ENCODE measurements at regions of chr2 and their contacts with region 1.

Region 1: GRCh38 chr2:224650815-224651439 is 65.2 kb downstream of the CCDC195 start:
- DNase-seq: no peak
- ATAC-seq: peak; percentile 64
- H3K4me3 Mint-ChIP-seq: no peak overlapping the region
- H3K27ac Mint-ChIP-seq: no peak overlapping the region
- H3K4me1 Mint-ChIP-seq: peaks cover 12% of the 10 kb centered on the region
- H3K27me3 Mint-ChIP-seq: no peaks in the 10 kb centered on the region
- CTCF ChIP-seq: peak; percentile 77

Region 2: GRCh38 chr2:223601932-223602666 is 1048.8 kb before region 1 on chr2 and contains the start of gene SCG2:
- CTCF ChIA-PET with region 1: no interaction called
- POLR2A ChIA-PET with region 1: no interaction called
- intact Hi-C with region 1: no loop called
- DNase-seq: no peak
- ATAC-seq: no peak
- H3K4me3 Mint-ChIP-seq: no peak within 1 kb of the TSS
- H3K27ac Mint-ChIP-seq: no peak within 1 kb of the TSS
- H3K4me1 Mint-ChIP-seq: peaks cover 4% of the 10 kb centered on the region
- H3K27me3 Mint-ChIP-seq: peaks cover 16% of the 10 kb centered on the region
- CTCF ChIP-seq: no peak
- total RNA-seq, gene SCG2: 0.15 and 0.35 TPM in 2 replicates

Region 3: GRCh38 chr2:223970343-223971128 is 680.4 kb before region 1 on chr2:
- CTCF ChIA-PET with region 1: interaction called, 7 read pairs
- POLR2A ChIA-PET with region 1: no interaction called
- intact Hi-C with region 1: loop called (anchors 5 kb)
- DNase-seq: no peak
- ATAC-seq: peak; percentile 64
- H3K4me3 Mint-ChIP-seq: no peak overlapping the region
- H3K27ac Mint-ChIP-seq: no peak overlapping the region
- H3K4me1 Mint-ChIP-seq: peaks cover 3% of the 10 kb centered on the region
- H3K27me3 Mint-ChIP-seq: no peaks in the 10 kb centered on the region
- CTCF ChIP-seq: peak; percentile 90

Region 4: DNA sequence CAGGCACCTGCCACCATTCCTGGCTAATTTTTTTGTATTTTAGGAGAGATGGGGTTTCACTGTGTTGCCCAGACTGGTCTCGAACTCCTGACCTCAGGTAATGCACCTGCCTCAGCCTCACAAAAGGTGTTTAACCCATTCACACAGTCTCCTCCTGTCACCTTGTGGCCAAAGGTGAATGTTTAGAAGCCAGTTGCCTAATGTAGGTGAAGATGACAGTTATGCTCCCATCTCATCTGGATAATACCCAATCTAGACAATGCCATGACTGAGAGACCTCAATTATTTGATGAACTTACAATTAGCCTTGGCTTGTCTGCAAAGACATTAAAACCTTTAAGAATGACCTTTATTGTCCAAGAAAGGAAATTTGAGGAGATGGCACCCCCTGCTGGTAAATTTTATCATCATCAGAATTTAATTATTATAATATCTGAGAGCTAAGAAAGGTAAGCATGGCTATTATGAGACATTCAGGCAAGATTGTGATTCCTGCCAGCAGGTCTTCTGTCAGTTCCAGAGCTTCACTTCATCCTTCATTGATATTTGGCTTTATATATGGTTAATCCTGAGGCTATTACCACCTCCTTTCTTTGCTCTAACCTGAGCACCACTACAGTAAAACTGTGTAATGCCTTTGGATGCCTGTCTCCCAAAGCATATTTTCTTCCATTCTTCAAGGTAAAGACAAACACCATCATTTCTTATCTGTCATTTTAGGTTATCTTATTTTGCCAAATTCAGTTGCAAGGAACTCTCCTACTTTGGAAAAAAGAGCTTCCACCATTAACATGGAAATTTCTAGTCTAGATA is 366.6 kb before region 1 on chr2:
- CTCF ChIA-PET with region 1: interaction called, 3 read pairs
- POLR2A ChIA-PET with region 1: no interaction called
- intact Hi-C with region 1: loop called (anchors 1 kb)
- DNase-seq: no peak
- ATAC-seq: no peak
- H3K4me3 Mint-ChIP-seq: no peak overlapping the region
- H3K27ac Mint-ChIP-seq: no peak overlapping the region
- H3K4me1 Mint-ChIP-seq: no peaks in the 10 kb centered on the region
- H3K27me3 Mint-ChIP-seq: peaks cover 23% of the 10 kb centered on the region
- CTCF ChIP-seq: peak; percentile 58

Region 5: DNA sequence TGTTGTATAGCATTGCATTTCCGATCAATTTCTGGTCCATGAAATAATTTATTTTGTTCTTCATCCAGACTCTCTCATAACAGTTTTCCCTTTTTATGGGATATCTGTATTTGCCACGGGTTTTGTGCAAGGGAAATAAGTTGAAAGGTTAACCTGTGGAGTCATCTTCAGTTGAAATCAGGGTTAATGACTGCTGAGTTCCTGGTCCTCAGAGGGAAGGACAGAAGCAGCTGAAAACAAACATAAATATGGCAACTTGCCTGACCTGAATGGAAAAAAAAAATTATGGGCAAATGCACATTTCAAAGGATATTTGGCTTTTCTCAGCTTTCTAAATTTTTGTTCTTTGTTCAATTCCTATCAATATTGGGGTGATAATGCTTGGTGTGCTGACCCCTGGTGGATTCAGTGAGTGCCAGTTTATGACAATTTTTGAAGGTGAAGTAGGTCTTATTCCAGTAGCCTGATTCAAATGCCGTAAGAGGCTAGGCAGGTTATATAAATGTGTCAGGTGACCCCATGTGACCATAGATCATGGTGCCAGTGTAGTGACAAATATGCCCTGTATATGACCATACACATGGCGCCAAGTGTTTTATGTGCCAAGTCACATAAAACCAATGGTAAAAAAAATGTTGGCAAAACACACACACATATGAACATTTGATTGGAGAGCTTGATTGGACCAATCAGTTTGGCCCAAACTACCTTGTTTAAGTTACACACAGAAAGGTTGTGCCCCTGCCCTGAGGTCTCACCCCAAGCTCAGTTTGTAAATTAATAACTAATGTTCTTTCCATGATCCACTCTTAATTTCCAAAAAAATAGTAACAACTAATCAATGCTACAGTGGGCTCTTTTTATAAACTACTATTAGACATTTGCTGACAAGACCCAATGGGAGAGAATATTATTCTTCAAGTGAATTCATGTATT is 201.4 kb before region 1 on chr2:
- CTCF ChIA-PET with region 1: interaction called, 7 read pairs
- POLR2A ChIA-PET with region 1: no interaction called
- intact Hi-C with region 1: loop called (anchors 1 kb)
- DNase-seq: no peak
- ATAC-seq: peak; percentile 45
- H3K4me3 Mint-ChIP-seq: no peak overlapping the region
- H3K27ac Mint-ChIP-seq: no peak overlapping the region
- H3K4me1 Mint-ChIP-seq: peaks cover 2% of the 10 kb centered on the region
- H3K27me3 Mint-ChIP-seq: no peaks in the 10 kb centered on the region
- CTCF ChIP-seq: no peak

Region 6: GRCh38 chr2:224545884-224546644 is 104.9 kb before region 1 on chr2:
- CTCF ChIA-PET with region 1: interaction called, 3 read pairs
- POLR2A ChIA-PET with region 1: no interaction called
- intact Hi-C with region 1: loop called (anchors 5 kb)
- DNase-seq: no peak
- ATAC-seq: no peak
- H3K4me3 Mint-ChIP-seq: peak overlapping the region; percentile 2
- H3K27ac Mint-ChIP-seq: peak overlapping the region; percentile 37
- H3K4me1 Mint-ChIP-seq: peaks cover 57% of the 10 kb centered on the region
- H3K27me3 Mint-ChIP-seq: no peaks in the 10 kb centered on the region
- CTCF ChIP-seq: no peak

Region 7: DNA sequence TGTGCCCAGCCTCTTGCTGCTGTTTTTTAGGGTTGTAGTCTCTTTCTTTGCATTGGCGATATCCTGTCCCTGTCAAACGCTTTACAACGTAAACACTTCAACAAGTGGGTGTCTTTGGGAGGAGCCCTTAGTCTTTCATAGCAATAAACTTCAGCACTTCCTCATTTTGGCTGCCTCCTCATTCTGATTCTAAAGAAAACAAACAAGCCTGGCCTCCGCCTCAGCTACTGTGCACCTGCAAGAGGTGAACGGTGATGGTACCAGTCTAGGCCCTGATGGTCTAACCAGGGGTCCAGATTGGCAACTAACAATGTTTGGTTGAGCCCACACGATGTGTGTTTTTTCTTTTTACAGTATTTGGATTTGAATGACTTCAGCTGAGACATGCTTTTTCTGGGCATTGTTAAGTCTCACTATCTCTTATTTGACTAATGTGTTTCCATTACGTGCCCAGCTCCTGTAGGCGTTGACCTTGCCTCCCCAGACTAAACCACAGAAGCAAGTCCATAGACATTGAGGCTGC is 12.6 kb before region 1 on chr2:
- CTCF ChIA-PET with region 1: interaction called, 19 read pairs
- POLR2A ChIA-PET with region 1: no interaction called
- intact Hi-C with region 1: no loop called
- DNase-seq: peak; percentile 30
- ATAC-seq: peak; percentile 85
- H3K4me3 Mint-ChIP-seq: peak overlapping the region; percentile 42
- H3K27ac Mint-ChIP-seq: peak overlapping the region; percentile 91
- H3K4me1 Mint-ChIP-seq: peaks cover 18% of the 10 kb centered on the region
- H3K27me3 Mint-ChIP-seq: no peaks in the 10 kb centered on the region
- CTCF ChIP-seq: no peak

Region 8: GRCh38 chr2:224778474-224778877 is 127.5 kb after region 1 on chr2:
- CTCF ChIA-PET with region 1: interaction called, 19 read pairs
- POLR2A ChIA-PET with region 1: no interaction called
- intact Hi-C with region 1: loop called (anchors 1 kb)
- DNase-seq: no peak
- ATAC-seq: peak; percentile 69
- H3K4me3 Mint-ChIP-seq: no peak overlapping the region
- H3K27ac Mint-ChIP-seq: no peak overlapping the region
- H3K4me1 Mint-ChIP-seq: no peaks in the 10 kb centered on the region
- H3K27me3 Mint-ChIP-seq: no peaks in the 10 kb centered on the region
- CTCF ChIP-seq: peak; percentile 70

Region 9: DNA sequence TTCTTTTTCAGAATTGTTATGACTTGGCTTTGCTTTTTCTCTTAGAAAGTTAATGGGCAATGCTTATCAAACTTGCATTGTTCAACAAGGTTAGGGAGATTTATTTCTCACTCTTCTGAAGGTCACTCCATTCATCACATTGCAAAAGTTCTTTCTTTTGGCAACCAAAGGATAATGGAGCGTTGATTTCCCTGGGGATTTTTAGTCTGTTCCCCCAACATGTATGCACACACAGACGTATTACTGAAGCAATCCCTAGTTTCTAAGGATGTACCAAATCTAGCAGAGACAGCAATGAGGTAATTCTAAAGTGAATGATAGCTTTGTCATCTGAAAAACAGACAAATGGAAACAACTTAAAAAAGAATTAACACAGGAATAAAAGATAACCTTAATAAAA is 1097.7 kb after region 1 on chr2:
- CTCF ChIA-PET with region 1: no interaction called
- POLR2A ChIA-PET with region 1: no interaction called
- intact Hi-C with region 1: no loop called
- DNase-seq: no peak
- ATAC-seq: no peak
- H3K4me3 Mint-ChIP-seq: no peak overlapping the region
- H3K27ac Mint-ChIP-seq: no peak overlapping the region
- H3K4me1 Mint-ChIP-seq: no peaks in the 10 kb centered on the region
- H3K27me3 Mint-ChIP-seq: no peaks in the 10 kb centered on the region
- CTCF ChIP-seq: no peak